Activated naive CD4-positive, alpha-beta T cell treated with anti-CD3 and anti-CD28 coated beads for 36 hours (primary cell): ENCODE measurements at regions of chr5 and their contacts with region 1.

Region 1: GRCh38 chr5:132526290-132526973 is 16.9 kb downstream of the IL5 start:
- DNase-seq: peak; percentile 52
- H3K4me3 Mint-ChIP-seq: no peak overlapping the region
- H3K27ac Mint-ChIP-seq: no peak overlapping the region
- H3K4me1 Mint-ChIP-seq: peaks cover 29% of the 10 kb centered on the region
- H3K27me3 Mint-ChIP-seq: peaks cover 4% of the 10 kb centered on the region

Region 2: GRCh38 chr5:132546108-132546507 is 19.7 kb after region 1 on chr5:
- CTCF ChIA-PET with region 1: interaction called, 16 read pairs
- intact Hi-C with region 1: no loop called
- DNase-seq: peak; percentile 70
- H3K4me3 Mint-ChIP-seq: no peak overlapping the region
- H3K27ac Mint-ChIP-seq: no peak overlapping the region
- H3K4me1 Mint-ChIP-seq: peaks cover 9% of the 10 kb centered on the region
- H3K27me3 Mint-ChIP-seq: no peaks in the 10 kb centered on the region

Region 3: GRCh38 chr5:132622608-132623007 is 96.2 kb after region 1 on chr5:
- CTCF ChIA-PET with region 1: no interaction called
- intact Hi-C with region 1: loop called (anchors 5 kb)
- DNase-seq: no peak
- H3K4me3 Mint-ChIP-seq: no peak overlapping the region
- H3K27ac Mint-ChIP-seq: no peak overlapping the region
- H3K4me1 Mint-ChIP-seq: peaks cover 12% of the 10 kb centered on the region
- H3K27me3 Mint-ChIP-seq: no peaks in the 10 kb centered on the region

Region 4: GRCh38 chr5:132714456-132715307 is 188.2 kb after region 1 on chr5:
- CTCF ChIA-PET with region 1: interaction called, 21 read pairs
- intact Hi-C with region 1: loop called (anchors 1 kb)
- DNase-seq: no peak
- H3K4me3 Mint-ChIP-seq: no peak overlapping the region
- H3K27ac Mint-ChIP-seq: no peak overlapping the region
- H3K4me1 Mint-ChIP-seq: peaks cover 9% of the 10 kb centered on the region
- H3K27me3 Mint-ChIP-seq: no peaks in the 10 kb centered on the region

Region 5: GRCh38 chr5:132753135-132753987 is 226.9 kb after region 1 on chr5:
- CTCF ChIA-PET with region 1: interaction called, 14 read pairs
- intact Hi-C with region 1: no loop called
- DNase-seq: peak; percentile 52
- H3K4me3 Mint-ChIP-seq: no peak overlapping the region
- H3K27ac Mint-ChIP-seq: no peak overlapping the region
- H3K4me1 Mint-ChIP-seq: peaks cover 35% of the 10 kb centered on the region
- H3K27me3 Mint-ChIP-seq: no peaks in the 10 kb centered on the region

Region 6: DNA sequence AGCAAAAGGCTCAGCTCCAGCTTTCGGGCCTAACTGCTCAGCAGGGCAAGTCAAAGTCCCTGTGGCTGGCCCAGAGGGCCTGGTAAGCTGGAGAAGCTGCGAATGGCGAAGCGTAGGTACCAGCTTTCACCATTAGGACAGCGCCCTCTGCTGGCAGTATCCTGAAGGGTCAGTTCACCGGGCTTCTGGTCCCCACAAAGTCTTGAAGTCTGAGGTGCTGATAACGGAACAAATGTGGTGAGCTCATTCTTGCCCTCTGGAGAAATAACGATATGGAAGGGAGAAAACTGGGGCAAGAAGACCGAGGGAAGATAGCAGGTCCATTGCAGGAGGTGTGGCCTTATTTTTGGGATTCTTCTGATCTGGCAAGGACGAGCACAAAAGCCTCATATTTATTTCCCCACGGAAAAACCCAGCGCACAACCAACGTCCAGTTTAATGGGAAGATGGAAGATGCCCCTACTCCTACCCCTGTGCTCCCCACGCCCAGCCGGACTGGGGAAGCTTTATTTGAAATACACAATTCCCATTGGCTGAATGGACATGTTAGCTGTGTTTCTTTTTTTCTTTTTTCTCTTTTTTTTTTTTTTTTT is 293.8 kb after region 1 on chr5:
- CTCF ChIA-PET with region 1: interaction called, 33 read pairs
- intact Hi-C with region 1: loop called (anchors 1 kb)
- DNase-seq: peak; percentile 97
- H3K4me3 Mint-ChIP-seq: peak overlapping the region; percentile 41
- H3K27ac Mint-ChIP-seq: no peak overlapping the region
- H3K4me1 Mint-ChIP-seq: peaks cover 12% of the 10 kb centered on the region
- H3K27me3 Mint-ChIP-seq: peaks cover 29% of the 10 kb centered on the region

Region 7: GRCh38 chr5:133041910-133042309 is 515.5 kb after region 1 on chr5:
- CTCF ChIA-PET with region 1: no interaction called
- intact Hi-C with region 1: no loop called
- DNase-seq: no peak
- H3K4me3 Mint-ChIP-seq: no peak overlapping the region
- H3K27ac Mint-ChIP-seq: no peak overlapping the region
- H3K4me1 Mint-ChIP-seq: peaks cover 2% of the 10 kb centered on the region
- H3K27me3 Mint-ChIP-seq: no peaks in the 10 kb centered on the region